Heart right ventricle (tissue), 16 donors: ENCODE measurements at regions of chr3 and their contacts with region 1.

Region 1: GRCh38 chr3:20013396-20013795 is 1.3 kb upstream of the PP2D1 start:
- DNase-seq: no peak
- ATAC-seq: no peak
- H3K4me3 ChIP-seq: no peak overlapping the region
- H3K27ac ChIP-seq: no peak overlapping the region
- H3K4me1 ChIP-seq: no peaks in the 10 kb centered on the region
- H3K27me3 ChIP-seq: no peaks in the 10 kb centered on the region
- CTCF ChIP-seq: no peak

Region 2: GRCh38 chr3:19920401-19921075 is 92.9 kb before region 1 on chr3:
- intact Hi-C with region 1: no loop called
- DNase-seq: no peak
- ATAC-seq: no peak
- H3K4me3 ChIP-seq: no peak overlapping the region
- H3K27ac ChIP-seq: no peak overlapping the region
- H3K4me1 ChIP-seq: no peaks in the 10 kb centered on the region
- H3K27me3 ChIP-seq: no peaks in the 10 kb centered on the region
- CTCF ChIP-seq: no peak

Region 3: GRCh38 chr3:19972051-19972454 is 41.3 kb before region 1 on chr3:
- intact Hi-C with region 1: no loop called
- DNase-seq: no peak
- ATAC-seq: no peak
- H3K4me3 ChIP-seq: no peak overlapping the region
- H3K27ac ChIP-seq: no peak overlapping the region
- H3K4me1 ChIP-seq: peaks cover 0 to 48% (median 21%) of the 10 kb centered on the region in 9 donors
- H3K27me3 ChIP-seq: no peaks in the 10 kb centered on the region
- CTCF ChIP-seq: no peak

Region 4: DNA sequence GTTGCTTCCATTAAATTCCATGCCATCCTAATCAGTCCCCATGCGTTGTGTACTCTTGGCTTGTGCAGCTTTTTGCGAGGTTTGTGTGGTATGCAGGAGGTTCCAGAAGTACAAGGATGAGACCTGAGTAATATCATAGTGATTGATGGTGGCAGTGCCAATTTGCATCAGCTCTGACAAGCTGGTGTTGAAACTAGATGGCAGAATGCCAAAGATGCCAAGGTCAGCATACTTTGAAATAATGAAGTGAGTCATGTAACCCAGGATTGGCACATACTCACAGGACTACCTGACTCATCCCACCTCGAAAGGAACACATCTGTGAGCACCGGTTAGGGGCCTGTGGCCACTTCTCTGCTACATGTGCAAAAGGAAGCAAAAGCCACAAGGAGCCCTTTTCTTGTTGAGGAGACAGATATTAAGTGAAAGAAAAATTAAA is 41.2 kb after region 1 on chr3:
- intact Hi-C with region 1: no loop called
- DNase-seq: peak in 1 of 2 donors; percentile 65
- ATAC-seq: peak; percentile 51 to 88 (median 73)
- H3K4me3 ChIP-seq: no peak overlapping the region
- H3K27ac ChIP-seq: peak overlapping the region in 9 of 10 donors; percentile 47 to 83 (median 76)
- H3K4me1 ChIP-seq: peaks cover 14 to 65% (median 54%) of the 10 kb centered on the region in 9 donors
- H3K27me3 ChIP-seq: no peaks in the 10 kb centered on the region
- CTCF ChIP-seq: no peak

Region 5: DNA sequence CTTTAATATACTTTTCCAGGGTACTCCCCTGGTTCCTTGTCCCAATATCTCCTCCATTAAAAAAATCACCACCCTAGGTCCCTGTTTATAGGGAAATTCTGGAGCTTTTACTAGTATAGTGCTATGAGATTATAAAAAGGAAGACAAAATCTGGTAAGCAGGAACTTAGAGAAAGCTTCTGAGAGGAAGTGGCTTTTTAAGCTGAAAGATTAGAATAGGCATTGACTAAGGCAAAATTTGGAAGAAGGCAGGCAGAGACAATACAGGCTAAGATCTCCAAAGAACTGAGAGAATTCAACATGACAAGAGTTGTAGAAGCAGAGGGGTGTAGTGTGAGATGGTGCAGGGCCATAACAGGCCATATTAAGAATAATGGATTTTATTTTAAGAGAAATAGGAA is 146.8 kb after region 1 on chr3:
- intact Hi-C with region 1: no loop called
- DNase-seq: no peak
- ATAC-seq: peak in 2 of 8 donors; percentile 19 to 37
- H3K4me3 ChIP-seq: no peak overlapping the region
- H3K27ac ChIP-seq: peak overlapping the region in 3 of 10 donors; percentile 7 to 58 (median 10)
- H3K4me1 ChIP-seq: peaks cover 0 to 18% (median 6%) of the 10 kb centered on the region in 9 donors
- H3K27me3 ChIP-seq: no peaks in the 10 kb centered on the region
- CTCF ChIP-seq: no peak

Region 6: DNA sequence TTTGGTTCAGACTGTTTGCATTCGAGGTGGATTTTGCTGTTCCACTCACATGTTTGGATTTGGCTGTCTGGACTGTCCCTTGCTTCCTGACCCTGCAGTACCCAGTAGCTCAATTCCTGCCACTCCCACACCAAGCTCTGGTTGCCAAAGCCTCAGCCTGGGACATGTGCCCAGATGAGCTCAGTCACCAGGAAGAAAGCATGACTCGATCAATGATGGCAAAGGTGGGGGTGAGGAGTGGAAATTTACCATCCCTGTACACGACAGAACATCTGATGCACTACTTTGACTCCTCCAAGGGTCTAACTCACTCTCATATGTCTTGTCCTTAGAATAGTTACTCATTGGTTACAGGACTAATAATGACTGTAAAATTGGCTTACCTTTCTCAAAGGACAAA is 1692.4 kb after region 1 on chr3:
- intact Hi-C with region 1: loop called in 1 of 10 experiments (anchors 5 kb)
- DNase-seq: peak; percentile 56 to 69
- ATAC-seq: peak; percentile 90 to 100 (median 97)
- H3K4me3 ChIP-seq: no peak overlapping the region
- H3K27ac ChIP-seq: peak overlapping the region in 4 of 10 donors; percentile 7 to 60 (median 28)
- H3K4me1 ChIP-seq: peaks cover 0 to 20% (median 10%) of the 10 kb centered on the region in 9 donors
- H3K27me3 ChIP-seq: no peaks in the 10 kb centered on the region
- CTCF ChIP-seq: no peak